Naive thymus-derived CD4-positive, alpha-beta T cell (primary cell): ENCODE measurements at regions of chr6 and their contacts with region 1.

Region 1: GRCh38 chr6:144696610-144697368 is 411.7 kb downstream of the UTRN start:
- DNase-seq: no peak
- ATAC-seq: no peak
- H3K4me3 ChIP-seq: no peak overlapping the region
- H3K4me3 Mint-ChIP-seq: peak overlapping the region in 6 of 10 donors; percentile 1 to 26 (median 18)
- H3K27ac ChIP-seq: no peak overlapping the region
- H3K27ac Mint-ChIP-seq: peak overlapping the region in 2 of 9 donors; percentile 49 to 52
- H3K4me1 ChIP-seq: peaks cover 3 to 10% of the 10 kb centered on the region in 2 donors
- H3K4me1 Mint-ChIP-seq: peaks cover 8 to 49% (median 47%) of the 10 kb centered on the region in 7 donors
- H3K27me3 ChIP-seq: no peaks in the 10 kb centered on the region
- H3K27me3 Mint-ChIP-seq: no peaks in the 10 kb centered on the region

Region 2: DNA sequence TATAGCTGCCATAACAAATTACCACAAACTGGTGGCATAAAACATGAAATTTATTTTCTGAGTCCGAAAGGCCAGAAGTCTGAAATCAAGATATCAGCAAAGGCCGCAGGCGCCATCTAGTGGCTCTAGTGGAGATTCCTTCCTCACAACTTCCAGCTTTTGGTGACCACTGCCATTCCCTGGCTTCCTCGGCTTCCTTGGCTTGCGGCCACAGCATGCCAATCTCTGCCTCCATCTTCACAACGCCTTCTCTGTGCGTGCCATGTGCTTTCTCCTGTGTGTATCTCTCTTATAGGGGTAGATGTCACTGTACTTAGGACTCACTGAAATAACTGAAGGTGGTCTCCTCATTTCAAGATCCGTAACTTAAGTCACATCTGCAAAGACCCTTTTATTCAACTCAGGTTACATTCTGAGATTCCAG is 683.3 kb before region 1 on chr6:
- CTCF ChIA-PET with region 1: no interaction called
- POLR2A ChIA-PET with region 1: no interaction called
- intact Hi-C with region 1: no loop called
- DNase-seq: peak; percentile 18 to 58 (median 45)
- ATAC-seq: peak; percentile 54
- H3K4me3 ChIP-seq: no peak overlapping the region
- H3K4me3 Mint-ChIP-seq: no peak overlapping the region
- H3K27ac ChIP-seq: no peak overlapping the region
- H3K27ac Mint-ChIP-seq: peak overlapping the region in 1 of 9 donors; percentile 9
- H3K4me1 ChIP-seq: no peaks in the 10 kb centered on the region
- H3K4me1 Mint-ChIP-seq: peaks cover 0 to 4% (median 0%) of the 10 kb centered on the region in 7 donors
- H3K27me3 ChIP-seq: peaks cover 0 to 6% of the 10 kb centered on the region in 2 donors
- H3K27me3 Mint-ChIP-seq: peaks cover 11 to 45% (median 28%) of the 10 kb centered on the region in 5 donors

Region 3: GRCh38 chr6:144710237-144710636 is 13.4 kb after region 1 on chr6:
- CTCF ChIA-PET with region 1: no interaction called
- POLR2A ChIA-PET with region 1: no interaction called
- intact Hi-C with region 1: loop called in 1 of 2 experiments (anchors 2 kb)
- DNase-seq: no peak
- ATAC-seq: no peak
- H3K4me3 ChIP-seq: no peak overlapping the region
- H3K4me3 Mint-ChIP-seq: no peak overlapping the region
- H3K27ac ChIP-seq: no peak overlapping the region
- H3K27ac Mint-ChIP-seq: no peak overlapping the region
- H3K4me1 ChIP-seq: no peaks in the 10 kb centered on the region
- H3K4me1 Mint-ChIP-seq: peaks cover 0 to 17% (median 4%) of the 10 kb centered on the region in 7 donors
- H3K27me3 ChIP-seq: no peaks in the 10 kb centered on the region
- H3K27me3 Mint-ChIP-seq: no peaks in the 10 kb centered on the region

Region 4: DNA sequence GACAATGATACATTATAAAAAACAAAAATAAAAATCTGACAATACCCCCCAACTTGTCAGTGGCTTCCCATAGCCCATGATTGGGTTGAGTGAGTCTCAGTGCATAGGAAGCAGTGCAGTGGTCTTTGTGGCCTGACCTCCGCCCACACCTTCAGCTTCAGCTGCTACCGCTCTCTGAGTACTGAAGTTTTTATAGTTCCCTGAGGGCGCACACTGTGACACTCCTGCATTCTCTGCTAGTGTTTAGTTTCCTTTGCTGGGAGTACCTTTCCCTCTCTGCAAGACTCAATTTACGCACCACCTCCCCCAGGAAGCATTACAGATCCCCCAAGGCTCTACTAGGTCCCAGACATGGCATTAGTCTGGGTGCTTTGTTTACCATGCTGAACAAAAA is 29.3 kb after region 1 on chr6:
- CTCF ChIA-PET with region 1: no interaction called
- POLR2A ChIA-PET with region 1: no interaction called
- intact Hi-C with region 1: no loop called
- DNase-seq: no peak
- ATAC-seq: peak; percentile 46
- H3K4me3 ChIP-seq: no peak overlapping the region
- H3K4me3 Mint-ChIP-seq: peak overlapping the region in 3 of 10 donors; percentile 13 to 57 (median 14)
- H3K27ac ChIP-seq: no peak overlapping the region
- H3K27ac Mint-ChIP-seq: peak overlapping the region in 8 of 9 donors; percentile 3 to 80 (median 37)
- H3K4me1 ChIP-seq: peaks cover 0 to 4% of the 10 kb centered on the region in 2 donors
- H3K4me1 Mint-ChIP-seq: peaks cover 22 to 54% (median 30%) of the 10 kb centered on the region in 7 donors
- H3K27me3 ChIP-seq: no peaks in the 10 kb centered on the region
- H3K27me3 Mint-ChIP-seq: no peaks in the 10 kb centered on the region